ENCODE measurements at regions of chr1 and their contacts with region 1.

Region 1: DNA sequence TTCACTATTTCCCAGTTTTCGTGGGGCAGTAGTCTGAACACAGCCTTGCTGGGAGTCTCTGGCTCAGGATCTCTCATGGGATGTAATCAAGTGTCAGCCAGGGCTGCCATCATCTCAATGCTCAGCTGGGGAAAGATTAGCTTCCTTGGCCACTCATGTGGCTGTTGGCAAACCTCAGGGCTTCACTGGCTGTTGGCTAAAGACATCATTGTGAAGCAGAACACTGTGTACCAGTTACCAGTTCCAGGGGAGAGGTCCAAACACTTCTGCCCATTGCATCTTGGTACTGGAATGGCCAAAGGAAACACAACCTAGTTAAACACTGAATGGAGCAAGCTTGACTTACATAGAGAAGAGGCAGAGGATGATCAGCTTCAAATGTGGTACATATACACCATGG is 33.7 kb downstream of the AADACL4 start:
- DNase-seq: no peak
- ATAC-seq: no peak
- H3K4me3 ChIP-seq: no peak overlapping the region
- H3K27ac ChIP-seq: no peak overlapping the region; the same call in 2 of the 3 replicates
- H3K4me1 ChIP-seq: no peaks in the 10 kb centered on the region
- H3K27me3 ChIP-seq: peaks cover 21 to 25% of the 10 kb centered on the region in 2 experiments; a peak in 4 of 5 replicates
- CTCF ChIP-seq: no peak
- EP300 ChIP-seq: no peak
- POLR2A ChIP-seq: no peak
- RAD21 ChIP-seq: no peak

Region 2: GRCh38 chr1:12692967-12693782 is 15.6 kb after region 1 on chr1:
- CTCF ChIA-PET with region 1: no interaction called
- POLR2A ChIA-PET with region 1: no interaction called
- in situ Hi-C with region 1: no loop called
- intact Hi-C with region 1: no loop called
- DNase-seq: no peak
- ATAC-seq: no peak; the same call in 1 of the 3 replicates
- H3K4me3 ChIP-seq: no peak overlapping the region
- H3K27ac ChIP-seq: no peak overlapping the region
- H3K4me1 ChIP-seq: no peaks in the 10 kb centered on the region
- H3K27me3 ChIP-seq: peaks cover 29 to 37% of the 10 kb centered on the region in 2 experiments
- CTCF ChIP-seq: no peak
- EP300 ChIP-seq: no peak
- POLR2A ChIP-seq: no peak
- RAD21 ChIP-seq: no peak

Region 3: DNA sequence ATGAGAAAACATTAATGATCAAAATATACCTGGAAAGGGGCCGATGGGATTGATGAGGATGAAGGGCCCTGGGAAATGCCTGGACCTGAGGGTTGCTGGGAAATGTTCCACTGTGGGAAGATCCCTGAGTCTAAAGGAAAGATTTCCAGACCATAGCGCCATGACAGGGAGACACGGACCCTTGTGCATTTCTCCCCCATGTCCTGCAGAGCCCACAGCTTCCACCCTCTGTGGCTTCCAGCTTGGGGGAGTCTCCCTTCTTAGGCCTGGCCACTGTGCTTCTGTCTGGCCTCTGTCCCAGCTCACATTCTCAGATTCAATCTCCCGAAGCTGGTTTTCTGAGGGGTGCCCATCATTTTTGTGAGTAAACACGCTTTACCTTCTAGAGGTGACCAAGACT is 95.0 kb after region 1 on chr1:
- CTCF ChIA-PET with region 1: no interaction called
- POLR2A ChIA-PET with region 1: no interaction called
- in situ Hi-C with region 1: loop called (anchors 5 kb)
- intact Hi-C with region 1: no loop called
- DNase-seq: no peak
- ATAC-seq: no peak
- H3K4me3 ChIP-seq: no peak overlapping the region
- H3K27ac ChIP-seq: no peak overlapping the region
- H3K4me1 ChIP-seq: no peaks in the 10 kb centered on the region
- H3K27me3 ChIP-seq: peaks cover 13 to 49% of the 10 kb centered on the region in 2 experiments; a peak in 4 of 5 replicates
- CTCF ChIP-seq: no peak
- EP300 ChIP-seq: no peak
- POLR2A ChIP-seq: no peak
- RAD21 ChIP-seq: no peak

Measured in K562 (cell line).